ENCODE measurements at regions of chr12 and their contacts with region 1.

Region 1: GRCh38 chr12:124391340-124392261 is 96.7 kb downstream of the RFLNA start:
- DNase-seq: peak; percentile 88
- ATAC-seq: peak; percentile 74
- H3K4me3 ChIP-seq: peak overlapping the region; percentile 26 to 63 (median 31)
- H3K4me3 Mint-ChIP-seq: peak overlapping the region; percentile 94
- H3K27ac ChIP-seq: peak overlapping the region; percentile 63 to 86
- H3K27ac Mint-ChIP-seq: peak overlapping the region; percentile 74
- H3K4me1 ChIP-seq: peaks cover 39 to 49% of the 10 kb centered on the region in 2 donors
- H3K4me1 Mint-ChIP-seq: peaks cover 39% of the 10 kb centered on the region
- H3K27me3 ChIP-seq: no peaks in the 10 kb centered on the region
- H3K27me3 Mint-ChIP-seq: no peaks in the 10 kb centered on the region
- CTCF ChIP-seq: no peak

Region 2: GRCh38 chr12:124248941-124249825 is 142.4 kb before region 1 on chr12:
- CTCF ChIA-PET with region 1: no interaction called
- POLR2A ChIA-PET with region 1: no interaction called
- intact Hi-C with region 1: no loop called
- DNase-seq: no peak
- ATAC-seq: no peak
- H3K4me3 ChIP-seq: no peak overlapping the region
- H3K4me3 Mint-ChIP-seq: no peak overlapping the region
- H3K27ac ChIP-seq: no peak overlapping the region
- H3K27ac Mint-ChIP-seq: no peak overlapping the region
- H3K4me1 ChIP-seq: no peaks in the 10 kb centered on the region
- H3K4me1 Mint-ChIP-seq: no peaks in the 10 kb centered on the region
- H3K27me3 ChIP-seq: peaks cover 0 to 8% (median 0%) of the 10 kb centered on the region in 4 experiments
- H3K27me3 Mint-ChIP-seq: peaks cover 18% of the 10 kb centered on the region
- CTCF ChIP-seq: no peak

Region 3: DNA sequence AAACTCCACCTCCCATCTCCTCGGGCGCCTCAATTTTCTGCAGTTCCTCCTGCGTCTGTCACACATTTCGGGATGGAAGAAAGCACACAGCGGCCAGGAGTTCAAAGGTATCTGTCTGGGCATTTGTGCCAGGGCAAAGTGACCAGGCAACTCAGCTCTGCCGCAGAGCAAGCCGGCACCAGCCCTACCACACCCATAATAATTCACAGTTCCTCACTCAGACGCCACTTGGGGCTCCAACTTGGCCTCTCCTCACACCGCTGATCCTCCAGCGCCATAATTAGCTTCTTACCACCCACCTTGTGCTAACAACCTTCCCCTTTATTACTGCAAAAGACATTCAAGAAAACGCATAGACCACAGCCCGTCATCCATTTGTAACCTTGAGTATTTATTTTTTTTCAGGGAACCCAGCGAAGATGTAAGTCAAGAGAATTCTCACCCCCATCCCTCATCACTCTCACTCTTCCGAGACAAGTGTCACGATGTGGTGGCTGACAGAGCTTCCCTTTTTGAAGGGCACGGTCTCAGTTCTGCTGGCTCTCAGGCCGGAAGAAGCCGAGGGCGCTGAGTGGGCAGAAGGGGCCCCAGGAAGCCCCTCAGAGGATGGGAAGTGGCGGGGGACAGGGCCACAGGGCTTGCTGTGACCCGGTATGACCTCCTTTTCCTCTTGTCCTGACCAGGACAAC is 201.0 kb after region 1 on chr12:
- CTCF ChIA-PET with region 1: no interaction called
- POLR2A ChIA-PET with region 1: no interaction called
- intact Hi-C with region 1: loop called (anchors 5 kb)
- DNase-seq: peak; percentile 77
- ATAC-seq: peak; percentile 88
- H3K4me3 ChIP-seq: no peak overlapping the region
- H3K4me3 Mint-ChIP-seq: peak overlapping the region; percentile 62
- H3K27ac ChIP-seq: peak overlapping the region in 1 of 2 donors; percentile 57
- H3K27ac Mint-ChIP-seq: peak overlapping the region; percentile 47
- H3K4me1 ChIP-seq: peaks cover 21 to 30% of the 10 kb centered on the region in 2 donors
- H3K4me1 Mint-ChIP-seq: peaks cover 28% of the 10 kb centered on the region
- H3K27me3 ChIP-seq: peaks cover 0 to 9% (median 1%) of the 10 kb centered on the region in 4 experiments
- H3K27me3 Mint-ChIP-seq: peaks cover 13% of the 10 kb centered on the region
- CTCF ChIP-seq: no peak

Region 4: DNA sequence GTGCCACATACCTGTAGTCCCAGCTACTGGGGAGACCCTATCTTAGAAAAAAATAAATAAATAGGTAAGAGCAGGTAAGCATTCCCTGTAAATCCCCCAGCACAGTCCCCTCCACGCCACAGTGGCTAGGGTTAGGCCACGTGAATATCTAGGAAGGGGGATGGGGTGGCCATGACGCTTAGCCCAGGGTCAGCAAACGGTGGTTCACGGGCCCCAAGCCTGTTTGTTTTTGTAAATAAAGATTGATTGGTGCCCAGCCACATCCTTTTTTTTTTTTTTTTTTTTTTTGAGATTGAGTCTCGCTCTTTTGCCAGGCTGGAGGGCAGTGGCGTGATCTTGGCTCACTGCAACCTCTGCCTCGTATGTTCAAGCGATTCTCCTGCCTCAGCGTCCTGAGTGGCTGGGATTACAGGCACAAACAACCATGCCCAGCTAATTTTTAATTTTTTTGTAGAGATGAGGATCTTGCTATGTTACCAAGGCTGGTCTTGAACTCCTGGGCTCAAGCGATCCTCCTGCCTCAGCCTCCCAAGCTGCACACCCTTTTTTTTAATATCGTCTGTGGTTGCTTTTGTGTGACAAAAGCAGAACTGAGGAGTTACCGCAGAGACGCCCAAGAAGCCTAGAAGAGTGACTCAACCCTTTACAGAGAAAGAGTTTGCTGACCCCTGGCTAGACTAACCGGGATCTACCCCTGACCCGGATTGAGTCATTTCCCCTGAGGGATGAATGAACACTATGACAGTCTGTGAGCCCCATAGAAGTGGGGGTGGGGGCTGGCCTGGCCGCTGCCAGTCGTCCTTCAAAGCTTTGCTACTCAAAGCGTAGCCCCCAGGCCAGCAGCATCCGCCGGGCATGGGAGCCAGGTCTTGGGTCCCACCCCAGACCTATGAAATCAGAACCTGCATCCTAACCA is 289.5 kb after region 1 on chr12:
- CTCF ChIA-PET with region 1: no interaction called
- POLR2A ChIA-PET with region 1: no interaction called
- intact Hi-C with region 1: loop called (anchors 1 kb)
- DNase-seq: peak; percentile 54
- ATAC-seq: peak; percentile 89
- H3K4me3 ChIP-seq: no peak overlapping the region
- H3K4me3 Mint-ChIP-seq: no peak overlapping the region
- H3K27ac ChIP-seq: no peak overlapping the region
- H3K27ac Mint-ChIP-seq: no peak overlapping the region
- H3K4me1 ChIP-seq: peaks cover 0 to 12% of the 10 kb centered on the region in 2 donors
- H3K4me1 Mint-ChIP-seq: peaks cover 12% of the 10 kb centered on the region
- H3K27me3 ChIP-seq: no peaks in the 10 kb centered on the region
- H3K27me3 Mint-ChIP-seq: peaks cover 11% of the 10 kb centered on the region
- CTCF ChIP-seq: peak; percentile 11